ENCODE measurements at regions of chr18 and their contacts with region 1.

Region 1: DNA sequence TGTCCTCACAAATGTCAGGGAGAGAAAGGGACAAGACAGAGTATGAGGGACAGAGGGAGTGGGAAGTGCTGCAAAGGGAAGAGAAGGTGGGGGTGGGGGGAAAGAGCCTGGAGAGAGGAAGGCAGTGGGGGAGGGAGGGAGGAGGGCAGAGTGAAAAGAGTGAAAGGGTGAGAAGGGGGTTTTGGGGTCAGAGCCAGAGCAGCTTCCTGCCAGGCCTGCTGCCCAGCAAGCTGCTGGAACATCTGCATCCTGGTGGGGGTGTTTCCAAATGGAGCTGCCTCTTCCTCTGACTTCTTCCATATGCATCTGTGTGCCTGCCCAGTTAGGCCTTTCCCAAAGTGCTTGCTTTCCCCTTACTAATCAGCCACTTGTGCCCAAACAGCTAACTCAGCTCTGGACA is 94.3 kb upstream of the CELF4 start:
- DNase-seq: no peak
- H3K4me3 ChIP-seq: no peak overlapping the region
- H3K27ac ChIP-seq: no peak overlapping the region
- H3K4me1 ChIP-seq: no peaks in the 10 kb centered on the region
- H3K27me3 ChIP-seq: peaks cover 6% of the 10 kb centered on the region
- CTCF ChIP-seq: no peak

Region 2: GRCh38 chr18:37710726-37711125 is 50.8 kb after region 1 on chr18:
- intact Hi-C with region 1: loop called (anchors 10 kb)
- DNase-seq: no peak
- H3K4me3 ChIP-seq: no peak overlapping the region
- H3K27ac ChIP-seq: no peak overlapping the region
- H3K4me1 ChIP-seq: no peaks in the 10 kb centered on the region
- H3K27me3 ChIP-seq: peaks cover 5% of the 10 kb centered on the region
- CTCF ChIP-seq: no peak

Region 3: DNA sequence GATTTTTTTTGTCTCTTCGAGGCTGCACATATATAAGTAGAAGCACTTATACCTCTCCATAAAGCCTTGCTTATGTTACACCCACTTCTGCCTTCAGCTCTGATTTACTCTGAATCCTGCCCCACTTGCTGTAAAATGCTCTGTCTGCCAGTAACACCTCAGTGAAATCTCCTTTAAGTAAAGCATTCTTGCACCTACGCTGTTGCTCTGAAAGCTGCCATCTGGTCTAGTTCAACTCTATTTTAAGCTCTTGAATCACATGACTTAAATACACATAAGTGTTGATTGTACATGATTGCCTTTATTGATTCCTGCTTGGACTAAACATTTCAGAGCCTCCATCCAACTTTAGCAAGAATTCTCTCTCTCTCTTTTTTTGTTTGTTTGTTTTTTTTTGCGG is 514.7 kb after region 1 on chr18:
- intact Hi-C with region 1: no loop called
- DNase-seq: no peak
- H3K4me3 ChIP-seq: no peak overlapping the region
- H3K27ac ChIP-seq: no peak overlapping the region
- H3K4me1 ChIP-seq: no peaks in the 10 kb centered on the region
- H3K27me3 ChIP-seq: no peaks in the 10 kb centered on the region
- CTCF ChIP-seq: no peak

Measured in left ventricle myocardium inferior (tissue), 1 donor.